ENCODE measurements at regions of chr3 and their contacts with region 1.

Region 1: GRCh38 chr3:141875374-141875892 is 1.0 kb upstream of the ATP1B3 start:
- DNase-seq: peak; percentile 91
- ATAC-seq: peak; percentile 59
- H3K4me3 Mint-ChIP-seq: peak overlapping the region; percentile 91
- H3K27ac Mint-ChIP-seq: peak overlapping the region; percentile 97
- H3K4me1 Mint-ChIP-seq: peaks cover 35% of the 10 kb centered on the region
- H3K27me3 Mint-ChIP-seq: no peaks in the 10 kb centered on the region

Region 2: DNA sequence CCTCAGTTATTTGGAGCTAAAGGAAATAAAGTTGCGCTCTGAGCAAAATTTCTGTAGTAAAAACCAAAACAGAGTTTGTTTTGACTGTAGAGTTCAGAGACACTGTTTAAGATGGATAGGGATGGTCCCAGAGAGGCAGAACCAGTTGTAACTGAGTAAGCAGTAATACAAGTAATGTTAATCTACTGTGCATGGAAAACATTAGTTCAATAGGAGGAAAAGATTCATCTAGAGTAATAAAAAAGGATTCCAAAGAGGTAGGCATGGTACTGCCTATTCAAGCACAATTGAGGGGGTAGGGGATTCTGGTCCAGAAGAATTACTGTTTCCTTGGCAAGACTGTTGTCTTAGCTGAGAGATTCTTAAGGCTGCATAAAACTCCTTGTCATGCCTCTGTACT is 311.2 kb before region 1 on chr3:
- CTCF ChIA-PET with region 1: no interaction called
- POLR2A ChIA-PET with region 1: no interaction called
- DNase-seq: no peak
- ATAC-seq: no peak
- H3K4me3 Mint-ChIP-seq: no peak overlapping the region
- H3K27ac Mint-ChIP-seq: no peak overlapping the region
- H3K4me1 Mint-ChIP-seq: peaks cover 20% of the 10 kb centered on the region
- H3K27me3 Mint-ChIP-seq: no peaks in the 10 kb centered on the region

Region 3: DNA sequence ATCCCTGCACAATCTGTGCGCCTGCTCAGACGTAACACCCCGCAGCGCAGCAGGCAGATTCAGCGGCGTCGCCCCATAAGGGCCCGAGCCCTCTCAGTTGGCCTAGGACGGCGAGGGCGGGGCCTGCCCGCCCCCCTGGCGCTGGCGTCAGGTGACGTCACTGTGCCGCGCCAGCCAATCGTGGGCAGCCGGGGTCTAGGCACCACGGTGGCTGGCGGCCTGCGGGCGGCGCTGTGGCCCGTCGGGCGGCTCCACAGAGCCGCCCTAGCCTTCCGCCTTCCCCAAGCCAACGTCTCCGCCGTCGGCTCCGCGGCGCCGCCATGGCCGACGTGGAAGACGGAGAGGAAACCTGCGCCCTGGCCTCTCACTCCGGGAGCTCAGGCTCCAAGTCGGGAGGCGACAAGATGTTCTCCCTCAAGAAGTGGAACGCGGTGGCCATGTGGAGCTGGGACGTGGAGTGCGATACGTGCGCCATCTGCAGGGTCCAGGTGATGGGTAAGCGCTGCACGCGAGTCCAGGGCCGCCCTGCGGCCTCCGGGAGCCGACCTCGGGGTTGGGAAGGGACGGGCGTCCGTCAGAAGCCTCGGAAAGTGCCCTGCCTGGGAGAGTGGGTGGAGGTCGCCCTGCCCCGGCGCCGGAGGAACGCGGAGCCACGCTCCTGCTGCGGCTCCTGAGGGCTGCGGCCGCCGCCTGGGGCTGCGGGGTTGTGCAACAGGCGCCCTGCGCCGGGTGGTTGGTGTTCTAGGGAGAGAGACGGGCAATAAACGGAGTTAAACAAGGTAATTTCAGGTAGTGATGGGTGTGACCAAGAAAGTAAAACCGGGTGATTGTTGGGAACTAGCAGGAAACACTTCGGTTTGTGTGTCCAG is 137.2 kb before region 1 on chr3 and contains the start of gene RNF7:
- CTCF ChIA-PET with region 1: interaction called, 48 read pairs
- POLR2A ChIA-PET with region 1: interaction called, 15 read pairs
- DNase-seq: peak; percentile 97
- ATAC-seq: peak; percentile 94
- H3K4me3 Mint-ChIP-seq: peak within 1 kb of the TSS; percentile 98
- H3K27ac Mint-ChIP-seq: peak within 1 kb of the TSS; percentile 98
- H3K4me1 Mint-ChIP-seq: peaks cover 34% of the 10 kb centered on the region
- H3K27me3 Mint-ChIP-seq: peaks cover 5% of the 10 kb centered on the region
- total RNA-seq, gene RNF7: 58.5 to 61.2 TPM

Region 4: GRCh38 chr3:141796081-141796888 is 79.1 kb before region 1 on chr3:
- CTCF ChIA-PET with region 1: interaction called, 11 read pairs
- POLR2A ChIA-PET with region 1: interaction called, 31 read pairs
- DNase-seq: peak; percentile 86
- ATAC-seq: peak; percentile 85
- H3K4me3 Mint-ChIP-seq: peak overlapping the region; percentile 89
- H3K27ac Mint-ChIP-seq: peak overlapping the region; percentile 98
- H3K4me1 Mint-ChIP-seq: peaks cover 52% of the 10 kb centered on the region
- H3K27me3 Mint-ChIP-seq: no peaks in the 10 kb centered on the region

Region 5: GRCh38 chr3:141913150-141913811 is 37.8 kb after region 1 on chr3:
- CTCF ChIA-PET with region 1: interaction called, 16 read pairs
- POLR2A ChIA-PET with region 1: no interaction called
- DNase-seq: peak; percentile 65
- ATAC-seq: peak; percentile 82
- H3K4me3 Mint-ChIP-seq: no peak overlapping the region
- H3K27ac Mint-ChIP-seq: no peak overlapping the region
- H3K4me1 Mint-ChIP-seq: no peaks in the 10 kb centered on the region
- H3K27me3 Mint-ChIP-seq: no peaks in the 10 kb centered on the region

Measured in activated CD8-positive, alpha-beta T cell treated with anti-CD3 and anti-CD28 coated beads, Interleukin-2, amount 10 ng/mL, durations not matched to agents 7 days and 5 days (primary cell).